CD8-positive, alpha-beta memory T cell (primary cell): ENCODE measurements at regions of chr1 and their contacts with region 1.

Region 1: GRCh38 chr1:110554871-110555801 is 36.2 kb upstream of the KCNA10 start:
- DNase-seq: peak; percentile 23 to 61 (median 41)
- H3K4me3 ChIP-seq: no peak overlapping the region
- H3K4me3 Mint-ChIP-seq: peak overlapping the region in 5 of 7 donors; percentile 15 to 57 (median 44)
- H3K27ac ChIP-seq: no peak overlapping the region
- H3K27ac Mint-ChIP-seq: no peak overlapping the region
- H3K4me1 ChIP-seq: no peaks in the 10 kb centered on the region
- H3K4me1 Mint-ChIP-seq: peaks cover 0 to 4% (median 2%) of the 10 kb centered on the region in 3 donors
- H3K27me3 ChIP-seq: peaks cover 23% of the 10 kb centered on the region
- H3K27me3 Mint-ChIP-seq: peaks cover 28 to 66% of the 10 kb centered on the region in 2 donors

Region 2: DNA sequence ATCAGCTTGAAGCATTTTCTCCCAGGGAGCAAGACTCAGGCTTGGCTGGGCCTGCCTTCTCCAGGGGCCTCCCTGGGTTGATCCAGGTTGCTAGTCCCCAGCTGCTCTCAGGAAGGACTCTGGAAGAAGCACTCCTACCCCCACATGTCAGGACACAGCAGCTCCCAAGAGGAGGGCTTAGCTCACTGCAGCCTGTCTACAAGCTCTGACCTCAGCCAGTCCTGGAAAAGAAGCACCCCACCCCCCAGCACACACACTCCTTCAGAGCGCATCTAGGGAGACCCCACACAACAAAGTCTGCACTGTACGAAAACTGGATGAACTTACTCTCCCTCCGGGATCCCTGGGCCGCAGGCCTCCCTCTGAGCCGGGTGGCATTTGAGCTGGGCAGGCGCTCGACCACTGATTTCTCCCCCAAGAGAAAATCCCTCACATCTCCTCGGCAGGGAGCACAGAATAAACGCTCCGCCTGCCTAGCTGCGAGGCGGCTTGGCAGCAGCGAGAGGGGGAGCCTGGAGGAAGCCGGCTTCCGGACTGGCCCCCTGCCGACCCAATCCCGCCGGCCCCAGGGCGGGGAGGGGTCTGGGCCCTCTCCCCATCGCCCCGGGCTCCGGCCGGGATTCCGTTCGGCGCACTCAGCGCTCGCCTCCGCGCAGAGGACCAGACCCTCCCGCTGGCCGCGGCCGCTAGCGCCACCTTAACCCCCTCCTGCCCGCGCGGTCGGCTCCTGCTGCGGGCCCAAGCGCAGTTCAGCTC is 50.9 kb after region 1 on chr1 and contains the start of gene KCNA2:
- CTCF ChIA-PET with region 1: interaction called, 18 read pairs
- POLR2A ChIA-PET with region 1: no interaction called
- DNase-seq: no peak
- H3K4me3 ChIP-seq: peak within 1 kb of the TSS; percentile 55
- H3K4me3 Mint-ChIP-seq: peak within 1 kb of the TSS; percentile 73 to 90 (median 83)
- H3K27ac ChIP-seq: no peak within 1 kb of the TSS
- H3K27ac Mint-ChIP-seq: peak within 1 kb of the TSS in 1 of 8 donors; percentile 40
- H3K4me1 ChIP-seq: peaks cover 13% of the 10 kb centered on the region
- H3K4me1 Mint-ChIP-seq: peaks cover 10 to 30% (median 13%) of the 10 kb centered on the region in 3 donors
- H3K27me3 ChIP-seq: peaks cover 40% of the 10 kb centered on the region
- H3K27me3 Mint-ChIP-seq: peaks cover 19 to 59% of the 10 kb centered on the region in 2 donors
- total RNA-seq, gene KCNA2: 0.24 to 0.35 TPM

Region 3: GRCh38 chr1:111290630-111291029 is 735.5 kb after region 1 on chr1 and contains the start of gene CHIA:
- CTCF ChIA-PET with region 1: no interaction called
- POLR2A ChIA-PET with region 1: no interaction called
- DNase-seq: no peak
- H3K4me3 ChIP-seq: no peak within 1 kb of the TSS
- H3K4me3 Mint-ChIP-seq: no peak within 1 kb of the TSS
- H3K27ac ChIP-seq: no peak within 1 kb of the TSS
- H3K27ac Mint-ChIP-seq: no peak within 1 kb of the TSS
- H3K4me1 ChIP-seq: peaks cover 5% of the 10 kb centered on the region
- H3K4me1 Mint-ChIP-seq: peaks cover 0 to 7% (median 5%) of the 10 kb centered on the region in 3 donors
- H3K27me3 ChIP-seq: no peaks in the 10 kb centered on the region
- H3K27me3 Mint-ChIP-seq: peaks cover 0 to 2% of the 10 kb centered on the region in 2 donors
- total RNA-seq, gene CHIA: not detected